ENCODE measurements at regions of chr1 and their contacts with region 1.

Region 1: GRCh38 chr1:86913896-86914634 is at the start of gene SELENOF:
- DNase-seq: peak; percentile 100
- H3K4me3 Mint-ChIP-seq: no peak within 1 kb of the TSS
- H3K27ac Mint-ChIP-seq: peak within 1 kb of the TSS; percentile 53
- H3K4me1 Mint-ChIP-seq: peaks cover 47% of the 10 kb centered on the region
- H3K27me3 Mint-ChIP-seq: no peaks in the 10 kb centered on the region
- total RNA-seq, gene SELENOF: 111 to 115 TPM

Region 2: GRCh38 chr1:86085741-86086409 is 828.2 kb before region 1 on chr1:
- CTCF ChIA-PET with region 1: no interaction called
- intact Hi-C with region 1: no loop called
- DNase-seq: no peak
- H3K4me3 Mint-ChIP-seq: no peak overlapping the region
- H3K27ac Mint-ChIP-seq: no peak overlapping the region
- H3K4me1 Mint-ChIP-seq: no peaks in the 10 kb centered on the region
- H3K27me3 Mint-ChIP-seq: no peaks in the 10 kb centered on the region

Region 3: GRCh38 chr1:86395771-86396497 is 518.1 kb before region 1 on chr1 and contains the start of gene ODF2L:
- CTCF ChIA-PET with region 1: no interaction called
- intact Hi-C with region 1: loop called (anchors 1 kb)
- DNase-seq: peak; percentile 94
- H3K4me3 Mint-ChIP-seq: peak within 1 kb of the TSS; percentile 95
- H3K27ac Mint-ChIP-seq: peak within 1 kb of the TSS; percentile 91
- H3K4me1 Mint-ChIP-seq: peaks cover 44% of the 10 kb centered on the region
- H3K27me3 Mint-ChIP-seq: no peaks in the 10 kb centered on the region
- total RNA-seq, gene ODF2L: 17.8 to 18.0 TPM

Region 4: DNA sequence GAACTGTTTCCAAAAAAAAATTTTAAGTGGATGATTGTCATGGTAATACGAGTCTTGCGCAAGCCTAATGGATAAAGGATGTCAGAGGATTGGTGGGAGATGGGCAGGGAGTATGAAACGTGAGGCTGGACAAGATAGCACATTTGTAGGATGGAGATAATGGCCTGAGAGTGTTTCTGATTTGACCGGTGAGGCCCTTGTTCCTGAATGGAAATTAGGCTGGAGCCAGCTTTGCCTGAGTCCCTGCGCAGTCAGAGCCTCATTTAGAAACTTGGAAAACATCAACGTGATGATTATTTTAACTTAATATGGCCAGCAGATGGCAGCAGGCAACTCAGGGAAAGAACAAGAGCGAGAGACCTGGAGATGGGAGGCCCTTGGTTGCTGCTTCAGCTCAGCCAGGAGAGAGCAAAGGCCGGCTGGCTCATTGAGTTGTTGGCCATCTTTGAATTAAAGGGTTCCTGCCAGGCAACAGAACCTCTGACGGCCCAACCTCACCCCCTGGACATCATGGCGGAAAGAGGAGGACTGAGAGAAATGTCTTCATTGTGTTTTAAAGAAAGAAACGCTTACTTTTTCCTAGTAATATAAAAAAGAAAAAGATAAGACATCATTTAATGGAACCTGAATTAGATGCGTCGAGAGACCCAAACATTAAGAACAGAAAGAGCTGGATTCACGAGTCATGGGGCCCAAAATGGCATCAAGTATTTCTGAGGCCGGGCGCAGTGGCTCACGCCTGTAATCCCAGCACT is 80.4 kb before region 1 on chr1:
- CTCF ChIA-PET with region 1: interaction called, 6 read pairs
- intact Hi-C with region 1: loop called (anchors 1 kb)
- DNase-seq: peak; percentile 76
- H3K4me3 Mint-ChIP-seq: no peak overlapping the region
- H3K27ac Mint-ChIP-seq: no peak overlapping the region
- H3K4me1 Mint-ChIP-seq: peaks cover 4% of the 10 kb centered on the region
- H3K27me3 Mint-ChIP-seq: peaks cover 2% of the 10 kb centered on the region

Region 5: GRCh38 chr1:86965012-86965826 is 51.2 kb after region 1 on chr1:
- CTCF ChIA-PET with region 1: no interaction called
- intact Hi-C with region 1: loop called (anchors 1 kb)
- DNase-seq: peak; percentile 44
- H3K4me3 Mint-ChIP-seq: no peak overlapping the region
- H3K27ac Mint-ChIP-seq: no peak overlapping the region
- H3K4me1 Mint-ChIP-seq: no peaks in the 10 kb centered on the region
- H3K27me3 Mint-ChIP-seq: no peaks in the 10 kb centered on the region

Region 6: DNA sequence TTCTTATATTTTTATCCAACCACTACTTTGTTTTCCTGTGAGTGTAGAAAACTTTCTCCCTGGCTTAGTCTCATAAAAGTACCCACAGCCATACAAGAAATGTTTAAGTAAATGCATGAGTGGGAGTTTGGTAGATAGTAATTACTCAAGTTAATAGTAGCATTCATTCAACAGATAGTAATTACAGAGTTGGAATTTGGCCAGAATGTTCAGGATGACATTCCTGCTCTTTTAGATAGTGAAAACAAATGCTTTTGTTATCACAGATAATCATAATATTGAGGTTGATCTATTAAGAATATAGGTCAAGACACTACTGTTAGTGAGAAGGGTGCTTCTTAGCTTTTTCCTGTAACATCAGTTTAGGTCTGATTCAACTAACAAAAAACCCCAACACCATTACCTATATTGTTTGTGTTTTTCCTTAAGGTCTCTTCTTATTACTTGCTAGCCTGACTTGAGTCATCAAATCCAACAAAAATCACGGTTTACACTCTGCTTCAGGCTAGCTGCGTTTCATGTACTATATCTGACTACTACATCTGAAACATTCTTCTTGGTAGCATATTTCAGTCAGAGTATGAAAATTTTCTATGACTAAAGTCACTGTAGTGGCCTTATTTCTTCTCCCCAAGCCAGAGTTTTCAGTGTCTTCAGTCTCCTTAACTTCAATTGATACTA is 164.0 kb after region 1 on chr1:
- CTCF ChIA-PET with region 1: interaction called, 9 read pairs
- intact Hi-C with region 1: loop called (anchors 1 kb)
- DNase-seq: peak; percentile 20
- H3K4me3 Mint-ChIP-seq: no peak overlapping the region
- H3K27ac Mint-ChIP-seq: peak overlapping the region; percentile 31
- H3K4me1 Mint-ChIP-seq: peaks cover 15% of the 10 kb centered on the region
- H3K27me3 Mint-ChIP-seq: no peaks in the 10 kb centered on the region